Endothelial cell of umbilical vein (primary cell): ENCODE measurements at regions of chr14 and their contacts with region 1.

Region 1: DNA sequence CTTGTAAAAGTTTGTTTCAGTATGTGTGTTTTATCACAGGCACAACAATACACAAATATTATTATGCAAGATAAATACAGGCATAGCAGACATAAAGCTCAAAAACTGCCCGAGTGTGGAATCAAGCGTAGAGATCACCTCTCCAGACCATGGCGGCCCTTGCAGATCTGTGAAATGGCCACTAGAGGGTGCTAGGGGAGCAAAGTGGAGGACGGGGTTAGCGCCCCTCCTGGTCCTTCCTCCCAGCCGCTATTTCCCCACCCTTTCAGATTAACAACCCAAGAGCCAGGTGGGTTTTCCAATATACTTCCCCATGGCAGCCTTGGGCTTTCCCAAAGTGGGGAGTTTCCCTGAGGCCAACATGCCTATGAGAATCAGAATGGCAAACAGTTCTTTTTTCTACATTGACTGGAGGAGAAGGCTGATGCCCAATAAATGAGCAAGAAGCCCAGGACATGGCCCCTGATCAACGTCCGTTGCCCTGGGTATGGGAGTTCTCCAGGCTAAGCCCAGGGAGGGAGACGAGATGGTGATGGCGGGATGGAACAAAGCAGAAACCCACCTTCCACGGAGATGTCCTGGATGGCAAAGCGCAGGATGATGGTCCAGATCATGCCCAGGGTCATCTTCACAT is 67.4 kb downstream of the ACTN1 start:
- DNase-seq: peak; percentile 76
- H3K4me3 ChIP-seq: no peak overlapping the region
- H3K27ac ChIP-seq: no peak overlapping the region
- H3K4me1 ChIP-seq: no peaks in the 10 kb centered on the region
- H3K27me3 ChIP-seq: no peaks in the 10 kb centered on the region
- CTCF ChIP-seq: peak; percentile 96 to 99
- POLR2A ChIP-seq: no peak

Region 2: DNA sequence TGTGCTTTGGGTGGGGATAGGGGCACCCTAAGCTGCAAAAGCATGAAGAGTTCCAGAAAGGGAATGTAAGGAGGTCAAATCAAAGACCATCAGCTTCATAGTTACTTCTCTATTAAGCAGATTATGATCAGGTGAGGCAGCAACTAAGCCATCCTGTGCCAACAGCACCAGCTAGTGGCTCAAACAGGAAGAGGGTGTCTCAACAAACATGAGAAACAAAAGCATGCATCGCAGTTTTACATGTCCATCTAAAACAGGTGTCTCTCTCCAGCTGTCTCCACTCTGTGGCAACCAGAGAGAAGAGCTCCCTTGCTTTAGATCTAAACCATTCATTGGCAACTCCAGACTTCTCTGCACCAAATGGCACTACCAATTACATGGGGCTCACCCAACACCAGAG is 14.5 kb after region 1 on chr14:
- CTCF ChIA-PET with region 1: interaction called, 25 read pairs
- POLR2A ChIA-PET with region 1: no interaction called
- dilution Hi-C with region 1: no loop called
- intact Hi-C with region 1: no loop called
- DNase-seq: no peak
- H3K4me3 ChIP-seq: no peak overlapping the region
- H3K27ac ChIP-seq: no peak overlapping the region
- H3K4me1 ChIP-seq: no peaks in the 10 kb centered on the region
- H3K27me3 ChIP-seq: no peaks in the 10 kb centered on the region
- CTCF ChIP-seq: peak; percentile 27 to 46
- POLR2A ChIP-seq: no peak

Region 3: DNA sequence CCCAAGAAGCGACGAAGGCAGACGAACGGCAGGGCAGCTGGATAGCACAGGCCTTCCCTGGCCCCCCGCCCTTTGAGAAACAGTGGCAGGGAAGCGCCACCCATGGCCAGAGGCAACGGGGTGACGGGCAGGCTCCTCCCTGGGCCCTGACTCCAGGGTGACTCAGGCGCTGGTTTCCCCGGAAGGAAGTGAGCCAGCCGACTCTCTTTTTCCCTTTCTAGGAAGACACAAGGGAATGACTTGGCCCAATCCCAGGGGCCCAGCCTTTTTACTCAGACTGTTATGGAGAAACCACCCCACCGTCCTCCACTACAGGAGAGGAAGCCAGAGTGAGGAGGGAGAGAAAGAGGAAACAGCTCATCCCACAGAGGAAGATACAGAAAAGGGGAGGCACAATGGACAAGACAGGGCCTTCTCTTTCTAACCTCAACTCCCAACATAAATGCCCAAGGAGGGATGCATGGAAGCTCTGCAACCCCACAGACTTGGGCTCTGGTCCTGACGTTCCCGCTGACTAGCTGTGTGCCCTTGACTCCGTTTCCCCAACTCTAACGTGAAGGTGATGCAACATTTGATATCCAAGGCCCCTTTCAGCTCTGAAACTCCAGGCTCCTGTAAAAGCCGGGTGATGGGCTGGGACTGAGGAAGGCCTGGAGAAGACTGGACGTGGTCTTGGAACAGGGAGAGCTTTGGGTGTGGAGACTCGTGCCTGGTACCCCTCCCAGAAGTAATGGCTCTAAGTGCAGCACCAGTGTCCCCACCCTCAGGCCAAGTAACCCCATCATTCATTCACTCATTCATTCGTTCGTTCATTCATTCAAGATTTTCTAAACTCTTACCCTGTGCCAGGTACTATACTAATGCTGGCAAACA is 39.6 kb after region 1 on chr14:
- CTCF ChIA-PET with region 1: interaction called, 13 read pairs
- POLR2A ChIA-PET with region 1: no interaction called
- dilution Hi-C with region 1: no loop called
- intact Hi-C with region 1: no loop called
- DNase-seq: peak; percentile 74
- H3K4me3 ChIP-seq: no peak overlapping the region
- H3K27ac ChIP-seq: peak overlapping the region; percentile 77
- H3K4me1 ChIP-seq: peaks cover 78% of the 10 kb centered on the region
- H3K27me3 ChIP-seq: no peaks in the 10 kb centered on the region
- CTCF ChIP-seq: no peak
- POLR2A ChIP-seq: no peak

Region 4: DNA sequence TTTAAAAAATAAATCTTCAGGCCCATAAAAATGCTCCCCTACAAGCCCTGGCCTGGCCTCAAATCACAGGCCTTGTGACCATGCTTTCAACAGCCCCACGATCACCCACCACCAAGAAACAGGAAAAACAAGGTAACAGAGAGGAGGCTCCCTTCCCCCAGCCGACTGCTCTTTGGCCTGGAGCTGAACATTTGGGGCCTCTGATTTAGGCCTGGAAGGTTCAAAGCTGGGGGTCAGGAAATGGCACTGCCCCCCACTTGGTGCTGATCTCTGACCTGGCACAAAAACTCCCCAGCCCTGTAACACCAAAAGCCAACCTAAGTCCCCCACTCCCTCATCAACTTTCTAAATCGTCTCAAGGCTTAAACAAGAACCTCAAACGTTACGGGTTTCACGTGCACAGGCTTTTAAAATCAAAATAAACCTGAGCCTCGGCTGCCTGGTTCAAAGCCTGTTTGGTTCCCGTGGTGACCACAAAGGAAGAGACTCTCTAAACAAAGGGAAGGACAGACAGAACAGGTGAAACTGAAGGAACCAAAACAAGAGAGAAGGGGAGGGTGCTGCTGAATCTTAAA is 58.4 kb after region 1 on chr14:
- CTCF ChIA-PET with region 1: interaction called, 15 read pairs
- POLR2A ChIA-PET with region 1: no interaction called
- dilution Hi-C with region 1: no loop called
- intact Hi-C with region 1: loop called (anchors 2 kb)
- DNase-seq: peak; percentile 41
- H3K4me3 ChIP-seq: no peak overlapping the region
- H3K27ac ChIP-seq: peak overlapping the region; percentile 62
- H3K4me1 ChIP-seq: peaks cover 65% of the 10 kb centered on the region
- H3K27me3 ChIP-seq: no peaks in the 10 kb centered on the region
- CTCF ChIP-seq: no peak
- POLR2A ChIP-seq: no peak

Region 5: GRCh38 chr14:69027242-69027913 is 115.7 kb after region 1 on chr14:
- CTCF ChIA-PET with region 1: no interaction called
- POLR2A ChIA-PET with region 1: no interaction called
- dilution Hi-C with region 1: no loop called
- intact Hi-C with region 1: no loop called
- DNase-seq: no peak
- H3K4me3 ChIP-seq: no peak overlapping the region
- H3K27ac ChIP-seq: no peak overlapping the region
- H3K4me1 ChIP-seq: no peaks in the 10 kb centered on the region
- H3K27me3 ChIP-seq: no peaks in the 10 kb centered on the region
- CTCF ChIP-seq: no peak
- POLR2A ChIP-seq: no peak

Region 6: GRCh38 chr14:69101331-69101826 is 189.7 kb after region 1 on chr14:
- CTCF ChIA-PET with region 1: interaction called, 54 read pairs
- POLR2A ChIA-PET with region 1: interaction called, 10 read pairs
- dilution Hi-C with region 1: no loop called
- intact Hi-C with region 1: loop called (anchors 1 kb)
- DNase-seq: peak; percentile 80
- H3K4me3 ChIP-seq: no peak overlapping the region
- H3K27ac ChIP-seq: peak overlapping the region; percentile 16
- H3K4me1 ChIP-seq: peaks cover 19% of the 10 kb centered on the region
- H3K27me3 ChIP-seq: no peaks in the 10 kb centered on the region
- CTCF ChIP-seq: peak; percentile 61 to 70
- POLR2A ChIP-seq: no peak

Region 7: DNA sequence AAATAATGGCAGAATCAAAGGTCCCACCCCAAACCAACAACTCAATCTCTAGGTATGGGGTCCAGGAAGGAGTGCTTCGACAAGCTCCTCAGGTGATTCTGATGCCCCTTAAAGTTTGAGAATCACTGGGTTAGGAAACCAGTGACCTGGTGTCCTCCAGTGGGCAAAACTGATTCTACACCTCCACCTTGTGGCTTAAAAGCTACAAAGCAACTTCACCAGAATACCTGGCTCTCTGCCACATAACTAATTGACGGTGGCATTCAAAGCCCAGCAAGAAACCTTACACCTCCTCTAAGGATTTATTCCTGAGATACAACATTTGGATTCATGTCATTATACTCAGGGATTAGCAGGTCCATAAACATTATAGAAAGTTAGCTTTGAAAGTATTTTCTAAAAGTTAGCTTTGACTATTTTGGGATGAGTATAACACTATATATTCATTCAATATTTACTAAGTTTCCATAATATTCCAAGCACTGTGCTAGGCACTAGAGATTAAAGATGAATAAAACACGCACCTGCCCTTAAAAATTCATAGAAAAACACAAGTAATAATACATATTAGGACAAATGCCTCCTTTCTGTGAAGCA is 195.8 kb after region 1 on chr14:
- CTCF ChIA-PET with region 1: interaction called, 54 read pairs
- POLR2A ChIA-PET with region 1: no interaction called
- dilution Hi-C with region 1: no loop called
- intact Hi-C with region 1: loop called (anchors 1 kb)
- DNase-seq: peak; percentile 76
- H3K4me3 ChIP-seq: no peak overlapping the region
- H3K27ac ChIP-seq: no peak overlapping the region
- H3K4me1 ChIP-seq: peaks cover 2% of the 10 kb centered on the region
- H3K27me3 ChIP-seq: no peaks in the 10 kb centered on the region
- CTCF ChIP-seq: peak; percentile 58 to 73
- POLR2A ChIP-seq: no peak